Naive thymus-derived CD4-positive, alpha-beta T cell (primary cell): ENCODE measurements at regions of chr7 and their contacts with region 1.

Region 1: GRCh38 chr7:5396999-5397663 is 26.5 kb downstream of the TNRC18 start:
- DNase-seq: peak; percentile 75 to 92 (median 88)
- ATAC-seq: peak; percentile 96
- H3K4me3 ChIP-seq: peak overlapping the region; percentile 99
- H3K4me3 Mint-ChIP-seq: peak overlapping the region; percentile 78 to 89 (median 83)
- H3K27ac ChIP-seq: peak overlapping the region; percentile 93
- H3K27ac Mint-ChIP-seq: peak overlapping the region; percentile 84 to 95 (median 91)
- H3K4me1 ChIP-seq: peaks cover 20 to 21% of the 10 kb centered on the region in 2 donors
- H3K4me1 Mint-ChIP-seq: peaks cover 27 to 46% (median 37%) of the 10 kb centered on the region in 7 donors
- H3K27me3 ChIP-seq: no peaks in the 10 kb centered on the region
- H3K27me3 Mint-ChIP-seq: no peaks in the 10 kb centered on the region

Region 2: DNA sequence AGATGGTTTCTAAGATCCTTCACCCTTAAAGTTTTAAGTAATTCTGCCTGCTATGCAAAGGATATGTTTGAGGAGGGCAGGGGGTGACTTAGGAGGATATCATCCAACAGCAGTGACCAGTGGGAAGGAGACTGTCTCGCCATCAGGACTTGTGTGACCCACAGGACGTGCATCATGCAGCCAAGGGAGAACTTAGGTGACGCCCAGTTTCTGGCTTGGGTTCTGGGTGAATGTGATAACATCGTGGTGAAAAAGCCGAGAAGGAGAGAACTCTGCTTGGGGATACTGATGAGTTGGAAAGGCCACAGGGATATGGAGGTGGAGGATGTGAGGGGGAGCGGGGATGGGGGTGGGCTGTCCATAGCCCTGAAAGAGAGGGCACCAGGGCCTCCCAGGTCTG is 203.3 kb before region 1 on chr7:
- CTCF ChIA-PET with region 1: no interaction called
- POLR2A ChIA-PET with region 1: no interaction called
- intact Hi-C with region 1: loop called in 1 of 2 experiments (anchors 1 kb)
- DNase-seq: no peak
- ATAC-seq: no peak
- H3K4me3 ChIP-seq: no peak overlapping the region
- H3K4me3 Mint-ChIP-seq: peak overlapping the region in 1 of 10 donors; percentile 42
- H3K27ac ChIP-seq: no peak overlapping the region
- H3K27ac Mint-ChIP-seq: peak overlapping the region in 2 of 9 donors; percentile 14 to 37
- H3K4me1 ChIP-seq: peaks cover 14 to 19% of the 10 kb centered on the region in 2 donors
- H3K4me1 Mint-ChIP-seq: peaks cover 24 to 54% (median 42%) of the 10 kb centered on the region in 7 donors
- H3K27me3 ChIP-seq: no peaks in the 10 kb centered on the region
- H3K27me3 Mint-ChIP-seq: no peaks in the 10 kb centered on the region

Region 3: GRCh38 chr7:5320802-5321396 is 76.2 kb before region 1 on chr7:
- CTCF ChIA-PET with region 1: no interaction called
- POLR2A ChIA-PET with region 1: no interaction called
- intact Hi-C with region 1: no loop called
- DNase-seq: no peak
- ATAC-seq: no peak
- H3K4me3 ChIP-seq: no peak overlapping the region
- H3K4me3 Mint-ChIP-seq: no peak overlapping the region
- H3K27ac ChIP-seq: no peak overlapping the region
- H3K27ac Mint-ChIP-seq: no peak overlapping the region
- H3K4me1 ChIP-seq: no peaks in the 10 kb centered on the region
- H3K4me1 Mint-ChIP-seq: no peaks in the 10 kb centered on the region
- H3K27me3 ChIP-seq: no peaks in the 10 kb centered on the region
- H3K27me3 Mint-ChIP-seq: no peaks in the 10 kb centered on the region

Region 4: DNA sequence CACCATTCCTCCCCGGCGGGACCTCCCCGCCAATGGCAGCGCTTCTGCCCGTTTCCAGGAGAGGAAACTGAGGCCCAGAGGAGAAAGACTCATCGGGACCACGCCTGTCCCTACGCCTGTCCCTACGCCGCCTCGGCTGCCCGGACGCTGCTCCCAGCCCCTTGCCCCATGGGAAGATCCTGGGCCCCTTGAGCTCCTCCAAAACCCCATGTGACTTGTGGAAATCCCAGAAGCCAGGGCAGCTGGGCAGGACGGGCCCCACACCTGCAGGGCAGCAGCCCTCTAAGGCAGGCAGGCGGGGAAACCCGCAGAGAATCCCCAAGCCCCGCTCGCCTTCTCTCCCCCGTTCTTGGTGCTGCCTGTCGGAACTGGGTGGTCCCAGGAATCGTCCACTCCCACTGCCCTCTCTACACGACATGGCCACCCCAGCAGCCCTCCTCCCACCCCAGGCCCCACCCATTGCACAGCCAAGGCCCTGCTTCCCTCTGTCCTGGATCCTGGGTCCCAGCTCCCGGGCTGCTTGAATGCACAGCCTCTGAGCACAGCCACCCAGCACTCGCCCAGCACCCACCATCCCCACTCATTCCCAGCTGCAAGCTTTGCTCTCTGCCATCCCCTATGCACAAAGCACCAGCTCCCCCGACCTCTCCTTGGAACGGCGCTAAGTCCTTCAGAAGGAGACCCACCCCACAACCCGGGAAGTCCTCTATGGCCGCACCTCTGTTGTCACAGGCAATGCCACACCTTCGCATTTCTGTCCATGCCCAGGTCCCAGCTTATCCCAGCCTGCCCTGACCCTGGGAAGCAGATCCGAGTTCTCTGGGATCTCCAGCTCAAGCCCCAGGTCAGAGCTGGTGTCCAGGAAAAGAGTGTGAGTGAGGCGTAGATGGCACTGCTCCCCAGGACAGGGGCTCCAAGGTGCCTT is 63.7 kb before region 1 on chr7:
- CTCF ChIA-PET with region 1: no interaction called
- POLR2A ChIA-PET with region 1: no interaction called
- intact Hi-C with region 1: loop called in 1 of 2 experiments (anchors 2 kb)
- DNase-seq: no peak
- ATAC-seq: no peak
- H3K4me3 ChIP-seq: no peak overlapping the region
- H3K4me3 Mint-ChIP-seq: peak overlapping the region in 2 of 10 donors; percentile 33 to 69
- H3K27ac ChIP-seq: no peak overlapping the region
- H3K27ac Mint-ChIP-seq: no peak overlapping the region
- H3K4me1 ChIP-seq: peaks cover 16 to 24% of the 10 kb centered on the region in 2 donors
- H3K4me1 Mint-ChIP-seq: peaks cover 18 to 32% (median 20%) of the 10 kb centered on the region in 7 donors
- H3K27me3 ChIP-seq: no peaks in the 10 kb centered on the region
- H3K27me3 Mint-ChIP-seq: peaks cover 0 to 3% (median 0%) of the 10 kb centered on the region in 5 donors

Region 5: DNA sequence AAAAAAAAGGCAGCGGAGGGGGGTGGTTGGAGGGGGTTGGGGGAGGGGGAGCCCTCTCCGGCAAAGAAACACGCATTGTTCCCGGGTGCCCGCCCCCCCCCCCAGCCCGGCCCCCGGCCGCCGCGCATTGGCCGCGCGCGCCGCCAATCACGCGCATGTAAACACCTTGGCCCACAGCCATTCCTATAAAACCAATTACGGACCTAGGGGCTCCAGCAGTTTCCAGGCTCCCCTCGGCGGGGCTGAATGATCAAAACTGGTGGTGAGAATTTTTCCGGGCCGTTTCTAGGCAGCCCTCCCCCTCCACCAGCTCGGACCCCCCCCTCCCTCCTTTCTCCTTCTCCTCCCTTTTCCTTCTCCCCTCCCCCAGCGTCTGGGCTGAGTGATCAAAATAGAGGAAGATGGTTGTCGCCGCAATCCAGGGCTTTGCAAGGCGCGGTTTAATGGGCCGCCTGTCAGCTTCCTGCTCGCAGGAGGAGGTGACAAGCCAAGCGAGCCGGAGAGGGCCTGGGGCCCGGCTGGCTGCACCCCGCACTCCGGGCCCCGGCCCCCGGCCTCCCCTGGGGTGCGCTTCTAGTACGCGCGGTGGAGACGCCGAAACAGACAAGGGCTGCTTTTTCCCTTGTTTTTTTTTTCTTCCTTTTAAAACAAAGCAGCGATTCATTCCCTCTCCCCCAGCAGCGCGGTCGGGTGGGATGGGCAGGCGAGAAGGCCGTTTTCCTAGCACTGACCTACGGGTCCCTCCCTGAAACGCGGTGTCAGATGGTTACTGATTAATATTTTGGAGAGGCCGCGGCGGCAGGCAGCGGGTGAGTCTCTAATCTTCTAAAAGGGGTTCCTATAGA is 26.9 kb after region 1 on chr7:
- CTCF ChIA-PET with region 1: interaction called, 7 read pairs
- POLR2A ChIA-PET with region 1: interaction called, 12 read pairs
- intact Hi-C with region 1: loop called (anchors 1 to 2 kb)
- DNase-seq: peak in 6 of 9 donors; percentile 17 to 53 (median 40)
- ATAC-seq: peak; percentile 69
- H3K4me3 ChIP-seq: no peak overlapping the region
- H3K4me3 Mint-ChIP-seq: peak overlapping the region; percentile 74 to 90 (median 84)
- H3K27ac ChIP-seq: no peak overlapping the region
- H3K27ac Mint-ChIP-seq: peak overlapping the region in 3 of 9 donors; percentile 34 to 90 (median 81)
- H3K4me1 ChIP-seq: peaks cover 34 to 66% of the 10 kb centered on the region in 2 donors
- H3K4me1 Mint-ChIP-seq: peaks cover 25 to 53% (median 32%) of the 10 kb centered on the region in 7 donors
- H3K27me3 ChIP-seq: peaks cover 29 to 58% of the 10 kb centered on the region in 2 donors
- H3K27me3 Mint-ChIP-seq: peaks cover 36 to 78% (median 47%) of the 10 kb centered on the region in 5 donors

Region 6: DNA sequence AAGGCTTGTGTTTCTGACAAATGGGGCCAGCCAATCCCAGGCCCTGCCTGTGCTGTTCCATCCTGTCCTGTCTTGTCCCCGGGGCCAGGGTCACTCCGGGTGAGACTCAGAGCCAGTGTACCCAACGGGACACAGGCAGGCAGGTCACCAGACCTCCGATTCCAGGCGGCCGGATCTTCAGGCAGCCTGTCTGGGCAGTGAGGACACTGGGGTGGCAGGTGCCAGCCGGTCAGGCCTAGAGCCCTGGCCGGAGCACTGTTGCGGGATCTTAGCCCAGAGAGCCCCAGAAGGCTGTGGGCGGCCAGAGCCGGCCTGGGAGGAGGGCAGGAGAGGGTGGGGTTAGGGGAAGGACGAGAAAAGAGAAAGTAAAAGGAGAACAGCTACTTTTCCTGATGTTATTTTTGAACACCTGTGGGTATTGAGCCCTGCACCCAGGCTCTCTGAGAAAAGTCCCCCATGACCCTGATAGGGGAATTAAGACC is 160.8 kb after region 1 on chr7:
- CTCF ChIA-PET with region 1: interaction called, 4 read pairs
- POLR2A ChIA-PET with region 1: no interaction called
- intact Hi-C with region 1: loop called in 1 of 2 experiments (anchors 2 kb)
- DNase-seq: peak in 3 of 9 donors; percentile 14 to 41 (median 23)
- ATAC-seq: no peak
- H3K4me3 ChIP-seq: peak overlapping the region; percentile 57
- H3K4me3 Mint-ChIP-seq: peak overlapping the region; percentile 82 to 91 (median 88)
- H3K27ac ChIP-seq: peak overlapping the region; percentile 85
- H3K27ac Mint-ChIP-seq: peak overlapping the region; percentile 78 to 97 (median 93)
- H3K4me1 ChIP-seq: peaks cover 39 to 47% of the 10 kb centered on the region in 2 donors
- H3K4me1 Mint-ChIP-seq: peaks cover 19 to 48% (median 41%) of the 10 kb centered on the region in 7 donors
- H3K27me3 ChIP-seq: peaks cover 0 to 4% of the 10 kb centered on the region in 2 donors
- H3K27me3 Mint-ChIP-seq: peaks cover 0 to 13% (median 0%) of the 10 kb centered on the region in 5 donors

Region 7: GRCh38 chr7:5780801-5781496 is 383.8 kb after region 1 on chr7:
- CTCF ChIA-PET with region 1: no interaction called
- POLR2A ChIA-PET with region 1: no interaction called
- intact Hi-C with region 1: loop called in 1 of 2 experiments (anchors 1 kb)
- DNase-seq: peak in 7 of 9 donors; percentile 12 to 60 (median 30)
- ATAC-seq: peak; percentile 35
- H3K4me3 ChIP-seq: peak overlapping the region; percentile 66
- H3K4me3 Mint-ChIP-seq: peak overlapping the region; percentile 72 to 92 (median 84)
- H3K27ac ChIP-seq: peak overlapping the region; percentile 92
- H3K27ac Mint-ChIP-seq: peak overlapping the region; percentile 66 to 93 (median 88)
- H3K4me1 ChIP-seq: peaks cover 24 to 25% of the 10 kb centered on the region in 2 donors
- H3K4me1 Mint-ChIP-seq: peaks cover 28 to 47% (median 42%) of the 10 kb centered on the region in 7 donors
- H3K27me3 ChIP-seq: no peaks in the 10 kb centered on the region
- H3K27me3 Mint-ChIP-seq: no peaks in the 10 kb centered on the region

Region 8: DNA sequence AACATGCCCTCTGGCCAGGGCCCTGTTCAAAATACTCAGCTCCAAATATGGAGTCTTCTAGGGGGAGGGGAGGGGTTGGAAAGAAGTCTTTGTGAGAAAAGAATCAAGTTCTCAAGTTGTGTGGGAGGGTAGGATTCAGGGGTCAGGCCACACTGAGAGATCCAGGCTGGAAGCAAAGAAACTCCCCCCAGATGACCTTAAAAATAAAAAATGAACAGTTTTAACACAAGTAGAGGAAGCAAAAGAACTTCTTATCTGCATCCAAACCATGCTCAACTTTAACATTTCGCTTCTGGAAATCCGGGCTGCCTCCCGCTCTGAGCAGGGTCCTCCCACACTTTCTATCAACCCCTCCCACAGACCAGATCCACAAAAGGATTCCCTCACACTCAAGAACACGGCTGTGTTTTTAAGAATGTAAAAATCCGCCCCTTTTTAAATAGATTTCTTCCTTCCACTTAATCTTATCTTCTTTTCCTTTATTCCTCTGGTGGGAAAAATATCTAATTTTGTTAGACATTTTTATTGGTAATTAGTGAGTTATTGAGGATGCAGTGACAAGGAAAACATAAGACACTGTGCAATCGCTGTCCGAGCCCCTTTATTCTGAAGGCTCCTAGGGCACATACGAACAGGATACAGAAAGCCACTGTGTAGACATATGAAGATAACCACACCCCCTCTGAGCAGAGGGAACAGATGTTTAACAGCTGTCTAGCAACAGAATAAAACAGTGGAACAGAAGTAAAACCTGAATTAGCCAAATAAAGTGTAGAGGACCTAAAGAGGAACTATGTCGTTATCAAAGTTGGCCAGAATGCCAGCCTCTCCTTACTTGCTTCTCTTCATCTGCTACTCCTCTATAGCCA is 831.5 kb after region 1 on chr7:
- CTCF ChIA-PET with region 1: no interaction called
- POLR2A ChIA-PET with region 1: no interaction called
- intact Hi-C with region 1: no loop called
- DNase-seq: peak in 2 of 9 donors; percentile 3 to 12
- ATAC-seq: peak; percentile 62
- H3K4me3 ChIP-seq: no peak overlapping the region
- H3K4me3 Mint-ChIP-seq: peak overlapping the region in 2 of 10 donors; percentile 22 to 45
- H3K27ac ChIP-seq: no peak overlapping the region
- H3K27ac Mint-ChIP-seq: no peak overlapping the region
- H3K4me1 ChIP-seq: peaks cover 0 to 12% of the 10 kb centered on the region in 2 donors
- H3K4me1 Mint-ChIP-seq: peaks cover 6 to 38% (median 24%) of the 10 kb centered on the region in 7 donors
- H3K27me3 ChIP-seq: no peaks in the 10 kb centered on the region
- H3K27me3 Mint-ChIP-seq: peaks cover 0 to 54% (median 0%) of the 10 kb centered on the region in 5 donors